HEK293 (cell line): ENCODE measurements at regions of chr12 and their contacts with region 1.

Region 1: GRCh38 chr12:2751686-2752085 is 43.1 kb upstream of the FKBP4 start:
- H3K4me3 ChIP-seq: no peak overlapping the region
- H3K27ac ChIP-seq: no peak overlapping the region
- H3K4me1 ChIP-seq: no peaks in the 10 kb centered on the region
- CTCF ChIP-seq: no peak

Region 2: GRCh38 chr12:2739817-2740641 is 11.7 kb before region 1 on chr12:
- CTCF ChIA-PET with region 1: interaction called, 12 read pairs
- POLR2A ChIA-PET with region 1: no interaction called
- H3K4me3 ChIP-seq: no peak overlapping the region
- H3K27ac ChIP-seq: no peak overlapping the region
- H3K4me1 ChIP-seq: no peaks in the 10 kb centered on the region
- CTCF ChIP-seq: no peak; the same call in 1 of the 2 replicates

Region 3: DNA sequence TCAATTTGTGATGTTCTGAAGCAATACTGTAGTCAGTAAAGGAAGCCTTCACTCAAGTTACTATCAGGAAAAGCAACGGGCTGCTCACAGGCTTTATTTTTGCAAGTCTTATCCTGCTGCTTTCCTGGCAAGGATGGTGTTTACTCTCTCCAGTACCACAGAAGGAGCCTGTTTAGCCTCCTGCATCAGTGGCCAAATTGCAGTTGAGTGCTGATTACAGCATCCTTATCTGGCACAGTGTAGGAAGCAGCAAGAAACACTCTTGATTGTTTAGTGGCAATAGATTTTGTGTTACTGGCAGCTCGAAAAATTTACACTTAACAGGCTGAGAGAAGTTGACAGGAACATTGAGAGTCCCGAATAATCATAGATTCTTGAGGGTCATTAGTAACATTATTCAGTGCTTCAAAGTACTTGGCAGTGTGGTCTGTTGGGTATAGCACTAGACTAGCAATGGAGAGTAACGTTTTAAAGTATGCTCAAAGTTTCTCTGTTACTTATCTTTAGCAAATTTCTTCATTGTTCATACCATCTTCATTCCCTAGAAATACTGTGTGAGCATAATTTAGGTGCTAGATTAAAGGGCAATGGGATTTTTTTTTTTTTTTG is 150.7 kb after region 1 on chr12:
- CTCF ChIA-PET with region 1: no interaction called
- POLR2A ChIA-PET with region 1: no interaction called
- H3K4me3 ChIP-seq: no peak overlapping the region
- H3K27ac ChIP-seq: no peak overlapping the region
- H3K4me1 ChIP-seq: no peaks in the 10 kb centered on the region
- CTCF ChIP-seq: no peak